Activated T-helper 1 cell treated with anti-CD3 and anti-CD28 coated beads, Interleukin-12 subunit alpha, Interleukin-12 subunit beta, Interleukin-2, Interleukin-4 antibody, amounts not matched to agents 30 ng/mL and 10 ng/mL and 1 ng/mL, durations not matched to agents 14 hours and 24 hours and 36 hours (primary cell): ENCODE measurements at regions of chr11 and their contacts with region 1.

Region 1: DNA sequence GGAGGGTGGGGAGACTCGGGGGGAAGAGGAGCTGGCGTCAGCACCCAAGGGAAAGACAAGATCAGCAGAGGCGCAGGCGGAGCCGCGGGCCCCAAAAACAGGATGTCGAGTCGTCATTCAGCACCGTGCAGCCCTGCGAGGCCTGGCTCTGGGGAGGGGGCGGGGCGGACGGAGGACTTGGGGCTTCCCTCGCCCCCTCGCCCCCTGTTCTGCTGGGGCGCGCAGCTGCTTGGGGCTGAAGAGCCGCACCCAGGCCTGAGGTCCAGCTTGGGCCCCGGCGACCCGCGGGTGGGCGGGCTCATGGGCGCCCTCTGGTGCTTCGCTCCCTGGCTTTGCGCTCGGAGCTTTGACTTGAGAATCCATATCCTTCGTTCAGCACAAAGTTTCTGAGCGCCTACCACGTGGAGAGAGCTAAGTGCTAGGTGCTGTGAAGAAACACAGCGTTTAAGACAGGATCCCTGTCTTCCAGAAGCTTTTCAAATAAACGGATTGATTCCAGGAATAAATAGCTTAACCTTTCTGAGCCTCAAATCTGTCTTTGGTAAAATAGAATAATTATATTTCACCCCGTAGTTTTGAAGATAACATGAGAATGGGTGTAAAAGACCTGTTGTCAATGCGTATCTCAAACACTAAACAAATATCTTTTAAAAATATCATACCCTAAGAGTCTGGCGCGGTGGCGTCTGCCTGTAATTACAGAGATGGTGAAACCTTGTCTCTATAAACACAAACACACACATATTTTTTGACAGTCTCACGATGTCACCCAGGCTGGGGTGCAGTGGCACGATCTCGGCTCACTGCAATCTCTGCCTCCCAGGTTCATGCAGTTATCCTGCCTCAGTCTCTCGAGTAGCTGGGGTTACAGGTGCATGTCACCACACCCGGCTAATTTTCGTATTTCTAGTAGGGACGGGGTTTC is 929 bp upstream of the RHOG start:
- DNase-seq: peak; percentile 89
- H3K4me3 Mint-ChIP-seq: peak overlapping the region; percentile 81
- H3K27ac Mint-ChIP-seq: peak overlapping the region; percentile 97
- H3K4me1 Mint-ChIP-seq: peaks cover 59% of the 10 kb centered on the region
- H3K27me3 Mint-ChIP-seq: no peaks in the 10 kb centered on the region

Region 2: GRCh38 chr11:3781423-3781822 is 60.3 kb before region 1 on chr11:
- intact Hi-C with region 1: loop called (anchors 1 kb)
- DNase-seq: no peak
- H3K4me3 Mint-ChIP-seq: peak overlapping the region; percentile 47
- H3K27ac Mint-ChIP-seq: peak overlapping the region; percentile 71
- H3K4me1 Mint-ChIP-seq: peaks cover 58% of the 10 kb centered on the region
- H3K27me3 Mint-ChIP-seq: no peaks in the 10 kb centered on the region

Region 3: DNA sequence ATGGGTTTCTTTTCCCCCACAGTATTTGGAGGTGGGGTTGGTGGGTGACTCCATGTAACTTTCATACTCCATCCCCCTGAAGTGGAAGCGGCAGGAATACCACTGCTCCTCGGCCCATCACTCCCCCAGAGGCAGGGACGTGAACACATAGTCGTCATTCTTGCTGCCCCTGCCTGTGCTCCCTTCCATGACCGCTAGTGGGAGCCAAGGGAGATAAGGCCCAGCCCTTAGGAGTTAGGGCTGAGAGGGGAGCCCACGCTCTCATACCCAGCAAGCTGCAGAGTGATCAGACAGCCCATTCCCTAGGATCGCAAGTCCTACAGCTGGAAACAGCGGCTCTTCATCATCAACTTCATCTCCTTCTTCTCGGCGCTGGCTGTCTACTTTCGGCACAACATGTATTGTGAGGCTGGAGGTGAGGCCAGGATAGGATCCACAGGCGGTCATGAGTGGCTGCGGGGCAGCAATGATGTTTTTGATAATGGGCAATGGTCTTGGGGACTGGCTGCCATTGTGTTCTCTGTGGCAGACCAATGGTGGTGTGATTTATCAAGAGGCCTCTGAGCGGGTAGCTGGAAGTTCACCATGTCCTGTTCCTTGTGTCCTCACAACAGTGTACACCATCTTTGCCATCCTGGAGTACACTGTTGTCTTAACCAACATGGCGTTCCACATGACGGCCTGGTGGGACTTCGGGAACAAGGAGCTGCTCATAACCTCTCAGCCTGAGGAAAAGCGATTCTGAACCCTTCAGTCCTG is 16.8 kb before region 1 on chr11:
- intact Hi-C with region 1: loop called (anchors 1 kb)
- DNase-seq: peak; percentile 68
- H3K4me3 Mint-ChIP-seq: no peak overlapping the region
- H3K27ac Mint-ChIP-seq: no peak overlapping the region
- H3K4me1 Mint-ChIP-seq: peaks cover 38% of the 10 kb centered on the region
- H3K27me3 Mint-ChIP-seq: no peaks in the 10 kb centered on the region

Region 4: GRCh38 chr11:4094348-4095291 is 252.9 kb after region 1 on chr11 and contains the start of gene RRM1:
- intact Hi-C with region 1: loop called (anchors 1 kb)
- DNase-seq: peak; percentile 93
- H3K4me3 Mint-ChIP-seq: peak within 1 kb of the TSS; percentile 96
- H3K27ac Mint-ChIP-seq: peak within 1 kb of the TSS; percentile 97
- H3K4me1 Mint-ChIP-seq: peaks cover 76% of the 10 kb centered on the region
- H3K27me3 Mint-ChIP-seq: no peaks in the 10 kb centered on the region
- total RNA-seq, gene RRM1: 155 and 173 TPM in 2 replicates